ENCODE measurements at regions of chr5 and their contacts with region 1.

Region 1: DNA sequence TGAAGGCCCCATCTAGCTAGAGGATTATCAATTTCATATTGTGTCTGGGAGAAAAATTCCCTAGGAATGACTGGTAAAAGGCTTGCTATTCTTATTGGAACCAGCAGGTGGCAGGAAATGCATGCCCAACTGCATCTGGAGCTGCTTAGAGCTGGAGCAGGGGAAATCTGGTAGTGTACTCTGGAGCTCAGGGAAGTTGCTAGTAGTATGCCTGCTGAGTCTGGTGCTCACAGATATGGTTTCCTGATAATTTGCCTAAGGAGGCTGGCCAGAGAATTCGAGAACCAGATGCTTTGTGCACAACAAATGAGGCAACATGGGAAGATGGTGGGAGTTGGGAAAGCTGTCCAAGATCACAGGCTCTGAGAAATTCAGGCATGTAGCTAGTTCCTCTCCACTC is 53.7 kb downstream of the G3BP1 start:
- DNase-seq: no peak
- H3K4me3 ChIP-seq: no peak overlapping the region
- H3K27ac ChIP-seq: no peak overlapping the region
- H3K4me1 ChIP-seq: no peaks in the 10 kb centered on the region
- H3K27me3 ChIP-seq: no peaks in the 10 kb centered on the region
- CTCF ChIP-seq: peak; percentile 74 to 86 (median 80)
- POLR2A ChIP-seq: no peak

Region 2: DNA sequence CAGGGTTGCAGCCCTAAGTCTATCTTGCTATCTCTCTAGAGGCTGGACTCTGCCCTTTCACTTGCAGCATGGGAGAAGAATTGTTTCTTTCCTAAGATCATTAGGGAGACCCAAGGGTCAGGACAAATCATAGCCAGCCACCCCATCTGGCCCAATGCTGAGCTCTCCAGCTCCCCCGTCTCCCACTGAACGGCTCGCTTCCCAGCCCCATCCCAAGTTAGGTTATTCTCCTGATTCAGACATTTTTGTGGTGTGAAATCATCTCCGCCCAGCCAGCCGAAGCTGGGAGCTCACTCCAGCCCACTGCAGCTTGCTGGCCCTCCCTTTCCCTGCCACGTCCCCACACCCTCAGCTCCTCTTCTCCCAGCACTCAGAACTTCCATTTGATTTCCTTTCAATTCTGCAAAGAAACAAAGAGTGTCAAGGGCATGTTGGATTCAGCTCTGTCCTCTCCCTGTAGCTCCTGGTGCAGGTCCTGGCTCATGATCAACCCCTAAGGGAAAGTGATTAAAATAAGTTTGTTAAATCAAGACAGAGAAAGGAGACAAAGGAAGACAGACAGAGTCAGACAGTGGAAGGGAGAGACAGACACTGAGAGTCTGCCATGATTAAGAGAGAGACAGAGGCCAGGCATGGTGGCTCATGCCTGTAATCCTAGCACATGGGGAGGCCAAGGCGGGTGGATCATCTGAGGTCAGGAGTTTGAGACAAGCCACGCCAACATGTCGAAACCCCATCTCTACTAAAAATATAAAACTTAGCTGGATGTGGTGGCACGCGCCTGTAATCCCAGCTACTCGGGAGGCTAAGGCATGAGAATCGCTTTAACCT is 126.2 kb before region 1 on chr5:
- intact Hi-C with region 1: no loop called
- DNase-seq: no peak
- H3K4me3 ChIP-seq: peak overlapping the region in 1 of 4 donors; percentile 17
- H3K27ac ChIP-seq: peak overlapping the region; percentile 55 to 85 (median 79)
- H3K4me1 ChIP-seq: peaks cover 0 to 47% (median 12%) of the 10 kb centered on the region in 3 donors
- H3K27me3 ChIP-seq: no peaks in the 10 kb centered on the region
- CTCF ChIP-seq: no peak
- POLR2A ChIP-seq: no peak

Region 3: GRCh38 chr5:152142840-152143469 is 317.5 kb after region 1 on chr5:
- intact Hi-C with region 1: loop called (anchors 10 kb)
- DNase-seq: no peak
- H3K4me3 ChIP-seq: no peak overlapping the region
- H3K27ac ChIP-seq: no peak overlapping the region
- H3K4me1 ChIP-seq: no peaks in the 10 kb centered on the region
- H3K27me3 ChIP-seq: no peaks in the 10 kb centered on the region
- CTCF ChIP-seq: peak; percentile 53 to 76 (median 65)
- POLR2A ChIP-seq: no peak

Region 4: GRCh38 chr5:152505442-152506042 is 680.1 kb after region 1 on chr5:
- intact Hi-C with region 1: loop called (anchors 10 kb)
- DNase-seq: no peak
- H3K4me3 ChIP-seq: no peak overlapping the region
- H3K27ac ChIP-seq: no peak overlapping the region
- H3K4me1 ChIP-seq: no peaks in the 10 kb centered on the region
- H3K27me3 ChIP-seq: peaks cover 0 to 8% (median 0%) of the 10 kb centered on the region in 4 donors
- CTCF ChIP-seq: peak; percentile 30 to 62 (median 42)
- POLR2A ChIP-seq: no peak